ENCODE measurements at regions of chr9 and their contacts with region 1.

Region 1: DNA sequence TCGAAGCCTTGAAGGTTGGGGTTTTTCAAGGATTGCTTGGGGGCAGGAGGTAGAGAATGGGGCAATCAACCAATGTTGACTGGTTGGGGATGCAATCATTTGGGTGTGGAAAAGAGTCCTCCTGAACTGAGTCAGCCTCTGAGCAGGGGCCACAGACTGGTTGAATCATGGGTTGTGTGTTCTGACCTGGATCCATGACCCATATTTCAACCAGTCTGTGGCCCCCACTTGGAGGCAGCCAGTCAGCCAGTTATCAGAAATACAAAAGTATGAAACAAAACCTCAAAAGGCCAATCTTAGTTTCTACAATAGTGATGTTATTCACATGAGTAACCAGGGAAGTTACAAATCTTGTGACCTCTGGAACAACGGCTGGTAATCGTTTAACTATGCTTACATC is 81.4 kb upstream of the RANBP6 start:
- ATAC-seq: no peak
- H3K4me3 ChIP-seq: no peak overlapping the region
- H3K27ac ChIP-seq: no peak overlapping the region
- H3K4me1 ChIP-seq: no peaks in the 10 kb centered on the region

Region 2: DNA sequence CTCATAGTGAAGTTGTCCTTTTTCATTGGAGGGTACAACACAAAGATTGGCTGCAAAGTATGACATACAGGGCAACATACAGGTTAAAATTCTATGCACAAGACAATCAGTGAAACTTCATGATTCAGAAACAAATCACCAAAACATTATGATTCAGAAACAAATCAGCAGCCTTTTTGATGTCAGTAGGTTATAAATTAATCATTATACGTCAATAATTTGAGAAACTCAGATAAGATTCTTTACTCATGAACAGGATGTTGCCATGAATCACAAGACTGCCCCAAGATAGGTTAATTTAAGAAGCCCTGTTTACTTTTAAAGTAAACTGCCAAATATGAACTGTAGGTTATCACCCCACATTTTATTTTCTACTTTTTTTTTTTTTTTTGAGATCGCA is 56.6 kb after region 1 on chr9:
- in situ Hi-C with region 1: loop called in 1 of 9 experiments (anchors 10 kb)
- ATAC-seq: no peak
- H3K4me3 ChIP-seq: no peak overlapping the region
- H3K27ac ChIP-seq: no peak overlapping the region
- H3K4me1 ChIP-seq: no peaks in the 10 kb centered on the region

Region 3: GRCh38 chr9:6305954-6306563 is 209.2 kb after region 1 on chr9:
- in situ Hi-C with region 1: no loop called
- ATAC-seq: peak in 5 of 8 experiments; percentile 35 to 70 (median 40)
- H3K4me3 ChIP-seq: no peak overlapping the region
- H3K27ac ChIP-seq: no peak overlapping the region
- H3K4me1 ChIP-seq: no peaks in the 10 kb centered on the region

Measured in motor neuron (in vitro differentiated cells).